ENCODE measurements at regions of chr10 and their contacts with region 1.

Region 1: DNA sequence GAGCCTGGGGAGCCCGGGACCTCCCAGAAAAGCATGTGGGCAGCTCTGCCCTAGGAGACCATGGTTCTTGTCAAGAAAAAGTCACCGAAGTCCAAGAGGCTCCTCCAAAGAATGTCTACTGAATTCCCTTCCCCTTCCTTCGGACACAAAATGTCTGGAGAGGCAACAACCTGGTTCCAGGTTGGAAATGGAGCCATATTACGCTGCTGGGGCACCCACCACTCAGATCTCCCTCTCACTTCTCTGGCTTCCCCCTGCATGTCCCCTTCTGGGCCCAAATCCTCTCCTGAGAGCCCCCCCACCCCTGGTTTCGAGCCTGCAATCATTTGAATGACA is 52.6 kb downstream of the RGS10 start:
- DNase-seq: no peak
- ATAC-seq: peak; percentile 41
- H3K4me3 ChIP-seq: peak overlapping the region; percentile 38 to 57
- H3K27ac ChIP-seq: no peak overlapping the region
- H3K4me1 ChIP-seq: peaks cover 14% of the 10 kb centered on the region
- H3K27me3 ChIP-seq: no peaks in the 10 kb centered on the region
- CTCF ChIP-seq: no peak; the same call in 1 of the 2 replicates

Region 2: DNA sequence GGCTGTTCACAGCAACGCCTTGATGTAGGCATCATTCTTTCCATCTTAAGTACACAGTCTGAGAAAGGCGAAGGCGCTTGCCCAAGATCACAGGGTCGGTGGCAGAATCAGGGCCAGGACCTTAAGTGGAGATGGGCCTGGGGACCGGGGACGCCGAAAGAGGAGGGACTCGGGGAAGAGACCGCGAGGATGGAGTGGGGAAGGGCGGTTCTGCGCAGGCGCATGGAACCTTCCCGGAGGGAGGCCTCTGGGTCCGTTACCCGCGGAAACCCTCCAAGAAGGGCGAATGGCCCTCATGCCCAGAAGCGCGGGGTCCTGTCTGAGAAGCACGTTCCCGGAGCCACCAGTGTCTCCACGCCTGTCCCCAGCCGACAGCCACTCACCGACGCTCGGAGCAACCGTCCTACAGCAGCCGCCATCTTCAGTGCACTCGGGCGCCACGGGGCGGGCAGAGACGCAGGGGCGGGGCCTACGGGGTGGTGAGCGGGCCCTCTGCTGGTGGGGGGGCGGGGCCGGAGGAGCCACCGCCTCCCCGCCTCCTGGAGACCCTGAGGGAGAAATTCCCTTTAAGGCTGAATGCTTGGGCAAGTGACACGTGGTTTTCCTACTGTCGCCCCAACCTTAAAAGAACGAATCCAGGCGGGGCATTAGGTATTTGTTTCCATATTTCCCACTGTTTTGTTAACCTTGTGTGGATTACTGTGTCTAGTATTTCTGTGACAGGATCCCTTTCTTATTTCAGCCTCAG is 311.4 kb before region 1 on chr10 and contains the start of gene PRDX3:
- CTCF ChIA-PET with region 1: no interaction called
- POLR2A ChIA-PET with region 1: no interaction called
- in situ Hi-C with region 1: no loop called
- intact Hi-C with region 1: no loop called
- DNase-seq: peak; percentile 61
- ATAC-seq: peak; percentile 99
- H3K4me3 ChIP-seq: peak within 1 kb of the TSS; percentile 71 to 100
- H3K27ac ChIP-seq: peak within 1 kb of the TSS; percentile 94
- H3K4me1 ChIP-seq: peaks cover 21% of the 10 kb centered on the region
- H3K27me3 ChIP-seq: no peaks in the 10 kb centered on the region
- CTCF ChIP-seq: no peak
- total RNA-seq, gene PRDX3: 235 TPM

Region 3: DNA sequence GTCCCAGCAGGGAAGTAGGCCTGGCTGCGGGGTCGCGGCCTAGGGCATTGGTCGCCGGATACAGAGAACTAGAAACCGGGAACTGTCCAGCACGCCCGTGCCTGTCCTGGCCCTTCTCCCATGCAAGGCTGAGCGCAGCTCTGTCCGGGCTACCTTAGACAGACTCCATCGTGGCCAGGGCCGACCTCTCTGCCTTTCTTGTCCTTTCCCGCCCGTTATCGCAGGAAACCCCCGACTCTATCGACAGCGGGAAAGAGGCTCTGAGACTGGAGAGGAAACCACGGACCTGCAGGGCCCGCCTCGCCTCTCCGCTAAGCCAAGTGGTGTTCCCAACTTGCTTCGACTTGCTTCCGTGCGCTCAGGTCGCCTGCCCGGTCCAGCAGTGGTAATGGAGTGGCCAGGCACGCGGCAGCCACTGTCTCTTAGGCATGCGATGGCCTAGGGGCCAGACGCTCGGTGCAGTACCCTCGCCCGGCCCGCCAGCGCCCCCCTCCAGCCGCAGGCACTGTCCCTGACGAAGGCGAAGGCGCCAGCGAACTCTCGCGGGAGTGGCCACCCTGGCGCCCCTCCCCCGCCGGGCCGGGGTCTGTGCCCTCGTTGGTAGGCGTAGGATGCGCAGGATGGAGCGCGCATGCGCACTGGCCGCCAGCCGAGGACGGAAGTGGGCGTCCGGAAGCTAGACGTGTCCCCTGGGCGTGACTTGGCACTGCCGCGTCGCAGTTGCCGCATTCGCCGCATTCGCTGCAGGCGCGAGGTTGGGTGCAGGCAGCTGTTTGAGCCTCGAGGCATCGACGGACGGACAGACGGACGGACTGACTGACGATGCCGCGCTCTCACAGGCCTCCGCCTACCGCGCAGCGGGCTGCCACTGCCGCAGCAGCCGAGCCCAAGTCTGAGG is 328.3 kb after region 1 on chr10:
- CTCF ChIA-PET with region 1: interaction called, 14 read pairs
- POLR2A ChIA-PET with region 1: no interaction called
- in situ Hi-C with region 1: no loop called
- intact Hi-C with region 1: no loop called
- DNase-seq: no peak
- ATAC-seq: no peak
- H3K4me3 ChIP-seq: no peak overlapping the region
- H3K27ac ChIP-seq: no peak overlapping the region
- H3K4me1 ChIP-seq: no peaks in the 10 kb centered on the region
- H3K27me3 ChIP-seq: no peaks in the 10 kb centered on the region
- CTCF ChIP-seq: no peak

Measured in Panc1 (cell line).